ENCODE measurements at regions of chr21 and their contacts with region 1.

Region 1: GRCh38 chr21:27314131-27314530 is 347.2 kb upstream of the ADAMTS5 start:
- DNase-seq: no peak
- H3K4me3 ChIP-seq: no peak overlapping the region
- H3K27ac ChIP-seq: no peak overlapping the region
- H3K4me1 ChIP-seq: no peaks in the 10 kb centered on the region
- H3K27me3 ChIP-seq: no peaks in the 10 kb centered on the region
- CTCF ChIP-seq: no peak

Region 2: GRCh38 chr21:27067226-27067625 is 246.9 kb before region 1 on chr21:
- CTCF ChIA-PET with region 1: no interaction called
- POLR2A ChIA-PET with region 1: no interaction called
- intact Hi-C with region 1: no loop called
- DNase-seq: no peak
- H3K4me3 ChIP-seq: no peak overlapping the region
- H3K27ac ChIP-seq: no peak overlapping the region
- H3K4me1 ChIP-seq: no peaks in the 10 kb centered on the region
- H3K27me3 ChIP-seq: no peaks in the 10 kb centered on the region
- CTCF ChIP-seq: no peak

Region 3: GRCh38 chr21:27277110-27277509 is 37.0 kb before region 1 on chr21:
- CTCF ChIA-PET with region 1: interaction called, 15 read pairs
- POLR2A ChIA-PET with region 1: no interaction called
- intact Hi-C with region 1: no loop called
- DNase-seq: no peak
- H3K4me3 ChIP-seq: no peak overlapping the region
- H3K27ac ChIP-seq: no peak overlapping the region
- H3K4me1 ChIP-seq: no peaks in the 10 kb centered on the region
- H3K27me3 ChIP-seq: no peaks in the 10 kb centered on the region
- CTCF ChIP-seq: no peak

Region 4: DNA sequence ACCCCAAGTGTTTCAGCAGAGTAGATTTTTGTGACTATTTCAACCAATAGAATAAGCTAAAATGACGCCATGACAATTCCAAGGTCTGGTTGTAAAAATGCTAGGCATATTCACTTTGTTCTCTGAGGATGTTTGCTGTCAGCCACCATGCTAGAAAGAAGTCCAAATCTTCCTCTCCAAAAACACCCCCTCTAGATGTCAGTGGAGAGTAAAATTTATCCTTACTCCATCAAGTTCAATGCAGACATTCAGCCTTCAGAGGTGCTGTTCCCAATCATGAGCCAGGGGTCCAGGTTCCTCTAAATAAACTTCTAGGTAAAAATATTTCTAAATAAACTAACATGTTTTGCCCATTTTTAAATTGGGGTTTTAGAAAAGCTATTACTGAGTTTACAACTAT is 48.1 kb after region 1 on chr21:
- CTCF ChIA-PET with region 1: no interaction called
- POLR2A ChIA-PET with region 1: no interaction called
- intact Hi-C with region 1: no loop called
- DNase-seq: no peak
- H3K4me3 ChIP-seq: no peak overlapping the region
- H3K27ac ChIP-seq: no peak overlapping the region
- H3K4me1 ChIP-seq: no peaks in the 10 kb centered on the region
- H3K27me3 ChIP-seq: no peaks in the 10 kb centered on the region
- CTCF ChIP-seq: no peak

Measured in A673 (cell line).